Activated naive CD4-positive, alpha-beta T cell treated with anti-CD3 and anti-CD28 coated beads, Interleukin-2, amount 10 ng/mL, durations not matched to agents 7 days and 5 days (primary cell): ENCODE measurements at regions of chr6 and their contacts with region 1.

Region 1: DNA sequence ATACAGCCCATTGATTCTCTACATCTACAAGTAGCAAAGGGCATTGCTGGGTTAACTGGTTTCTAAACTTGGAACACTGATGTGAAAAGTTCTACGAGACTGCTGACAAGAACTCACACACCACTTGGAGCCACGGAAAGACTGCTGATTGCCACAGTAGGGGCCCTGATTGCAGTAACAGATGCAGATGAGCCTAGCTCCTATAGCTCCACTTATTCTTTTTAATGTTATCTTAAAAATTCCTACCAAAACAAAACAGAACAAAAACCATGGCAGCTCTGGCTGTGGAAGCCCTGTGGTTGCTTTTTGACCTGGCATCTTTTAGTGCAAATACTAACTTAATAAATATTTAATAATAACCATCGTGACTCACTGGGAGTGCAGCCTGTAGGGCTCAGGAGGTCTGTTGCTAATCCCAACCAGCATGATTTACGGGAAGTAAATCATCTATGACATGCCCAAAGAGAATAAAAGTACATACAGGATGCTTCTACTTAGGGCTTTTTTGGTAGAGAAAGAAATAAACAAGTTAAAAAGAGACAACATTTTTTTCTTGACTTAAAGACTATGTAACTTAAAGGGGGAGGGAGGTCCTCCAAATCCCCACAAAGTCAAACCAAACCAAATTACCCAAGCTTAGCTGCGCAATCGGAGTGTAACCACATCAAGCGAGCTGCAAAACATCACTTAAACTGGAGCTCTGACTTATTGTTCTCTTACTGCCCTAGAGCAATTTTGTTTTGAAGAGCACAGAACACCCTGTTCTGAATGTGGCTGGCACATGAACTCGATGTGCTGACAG is 87.2 kb downstream of the FKBP5 start:
- DNase-seq: peak; percentile 81
- H3K4me3 Mint-ChIP-seq: peak overlapping the region; percentile 77
- H3K27ac Mint-ChIP-seq: peak overlapping the region; percentile 99
- H3K4me1 Mint-ChIP-seq: peaks cover 77% of the 10 kb centered on the region
- H3K27me3 Mint-ChIP-seq: no peaks in the 10 kb centered on the region

Region 2: DNA sequence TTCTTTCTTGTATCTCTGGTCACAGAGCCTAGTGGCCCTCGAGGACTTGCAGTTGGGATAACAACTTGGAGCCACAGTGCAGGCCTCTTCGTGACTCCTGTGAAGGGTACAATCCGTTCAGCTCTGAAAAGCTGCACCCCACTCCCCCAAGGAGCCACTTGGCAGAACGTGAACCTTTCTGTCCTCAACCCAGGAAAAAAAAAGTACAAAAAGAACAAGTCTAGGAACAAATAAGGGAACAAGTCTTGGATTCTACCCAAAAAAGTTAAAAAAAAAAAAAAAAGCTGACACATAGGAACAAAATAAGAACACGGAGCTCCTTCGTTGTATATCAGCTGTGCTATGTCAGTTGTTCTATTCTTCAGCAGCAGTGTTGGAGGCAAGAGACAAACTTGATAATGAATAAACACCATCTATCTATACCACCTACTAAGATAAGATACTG is 10.9 kb before region 1 on chr6:
- CTCF ChIA-PET with region 1: interaction called, 12 read pairs
- DNase-seq: no peak
- H3K4me3 Mint-ChIP-seq: no peak overlapping the region
- H3K27ac Mint-ChIP-seq: no peak overlapping the region
- H3K4me1 Mint-ChIP-seq: peaks cover 75% of the 10 kb centered on the region
- H3K27me3 Mint-ChIP-seq: no peaks in the 10 kb centered on the region